ENCODE measurements at regions of chr12 and their contacts with region 1.

Region 1: GRCh38 chr12:2583091-2583497 is 211.7 kb upstream of the FKBP4 start:
- DNase-seq: peak; percentile 41 to 55
- ATAC-seq: peak; percentile 84 to 97
- H3K4me3 ChIP-seq: peak overlapping the region; percentile 30; the same call in 2 of the 3 replicates
- H3K27ac ChIP-seq: no peak overlapping the region
- H3K4me1 ChIP-seq: peaks cover 3% of the 10 kb centered on the region; the same call in 1 of the 3 replicates
- CTCF ChIP-seq: peak; percentile 83
- EP300 ChIP-seq: no peak
- POLR2A ChIP-seq: no peak
- RAD21 ChIP-seq: peak; percentile 77 to 91

Region 2: GRCh38 chr12:2057041-2057794 is 525.9 kb before region 1 on chr12:
- CTCF ChIA-PET with region 1: interaction called, 32 read pairs
- POLR2A ChIA-PET with region 1: no interaction called
- DNase-seq: peak in 1 of 2 experiments; percentile 49
- ATAC-seq: peak in 1 of 2 experiments; percentile 70; a peak in 3 of 6 replicates
- H3K4me3 ChIP-seq: no peak overlapping the region
- H3K27ac ChIP-seq: no peak overlapping the region
- H3K4me1 ChIP-seq: no peaks in the 10 kb centered on the region; the same call in 2 of the 3 replicates
- CTCF ChIP-seq: peak; percentile 45
- EP300 ChIP-seq: no peak
- POLR2A ChIP-seq: no peak
- RAD21 ChIP-seq: peak; percentile 49 to 66; a peak in 3 of 5 replicates

Region 3: GRCh38 chr12:2561367-2561766 is 21.7 kb before region 1 on chr12:
- CTCF ChIA-PET with region 1: interaction called, 13 read pairs
- POLR2A ChIA-PET with region 1: no interaction called
- DNase-seq: no peak
- ATAC-seq: no peak
- H3K4me3 ChIP-seq: no peak overlapping the region
- H3K27ac ChIP-seq: no peak overlapping the region
- H3K4me1 ChIP-seq: no peaks in the 10 kb centered on the region
- CTCF ChIP-seq: no peak
- EP300 ChIP-seq: no peak
- POLR2A ChIP-seq: no peak
- RAD21 ChIP-seq: no peak

Region 4: GRCh38 chr12:2607881-2608607 is 24.9 kb after region 1 on chr12:
- CTCF ChIA-PET with region 1: interaction called, 22 read pairs
- POLR2A ChIA-PET with region 1: no interaction called
- DNase-seq: no peak
- ATAC-seq: no peak
- H3K4me3 ChIP-seq: no peak overlapping the region
- H3K27ac ChIP-seq: no peak overlapping the region
- H3K4me1 ChIP-seq: no peaks in the 10 kb centered on the region; the same call in 2 of the 3 replicates
- CTCF ChIP-seq: no peak
- EP300 ChIP-seq: no peak
- POLR2A ChIP-seq: no peak
- RAD21 ChIP-seq: no peak

Region 5: DNA sequence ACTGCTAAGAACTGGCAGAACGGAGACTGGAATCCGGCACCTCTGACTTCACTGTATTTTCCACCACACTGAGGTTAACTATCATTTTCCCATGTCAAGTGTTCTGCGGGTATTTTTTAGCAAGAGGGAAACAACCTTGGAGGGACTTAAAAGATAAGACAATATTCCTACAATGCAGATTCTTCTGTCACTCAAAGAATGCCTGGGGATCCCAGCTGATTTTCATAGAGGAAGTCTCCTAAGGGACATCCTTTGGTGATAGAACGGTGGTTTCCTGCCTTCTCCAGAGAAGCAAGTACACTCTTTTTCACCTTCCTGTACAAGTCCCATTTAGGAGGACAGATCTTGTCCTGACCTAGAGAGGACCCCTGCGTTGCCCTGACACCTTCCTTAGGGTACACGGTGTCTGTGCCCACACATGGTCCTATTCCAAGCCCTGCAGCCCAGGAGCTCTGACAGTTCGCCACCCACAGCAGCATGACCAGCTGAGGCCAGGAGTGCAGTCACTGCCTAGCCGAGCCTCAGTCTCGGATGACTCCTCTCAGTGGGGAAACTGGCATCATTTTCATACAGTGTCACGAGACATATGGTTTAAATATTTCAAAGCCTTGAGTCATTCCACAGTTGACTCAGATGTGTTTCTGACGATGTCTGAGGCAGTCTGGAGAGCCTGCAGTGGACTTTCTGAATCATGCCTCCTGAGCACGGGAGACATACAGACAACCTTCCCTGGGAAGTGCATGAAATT is 30.4 kb after region 1 on chr12:
- CTCF ChIA-PET with region 1: interaction called, 22 read pairs
- POLR2A ChIA-PET with region 1: no interaction called
- DNase-seq: peak; percentile 22 to 66
- ATAC-seq: peak; percentile 89 to 92
- H3K4me3 ChIP-seq: no peak overlapping the region
- H3K27ac ChIP-seq: peak overlapping the region; percentile 16 to 33; a peak in 3 of 6 replicates
- H3K4me1 ChIP-seq: peaks cover 11% of the 10 kb centered on the region
- CTCF ChIP-seq: no peak
- EP300 ChIP-seq: no peak
- POLR2A ChIP-seq: no peak
- RAD21 ChIP-seq: no peak

Region 6: GRCh38 chr12:2624543-2625288 is 41.6 kb after region 1 on chr12:
- CTCF ChIA-PET with region 1: interaction called, 10 read pairs
- POLR2A ChIA-PET with region 1: no interaction called
- DNase-seq: peak in 1 of 2 experiments; percentile 55
- ATAC-seq: peak in 1 of 2 experiments; percentile 74; a peak in 3 of 6 replicates
- H3K4me3 ChIP-seq: no peak overlapping the region
- H3K27ac ChIP-seq: no peak overlapping the region
- H3K4me1 ChIP-seq: no peaks in the 10 kb centered on the region
- CTCF ChIP-seq: no peak; the same call in 2 of the 3 replicates
- EP300 ChIP-seq: no peak
- POLR2A ChIP-seq: no peak
- RAD21 ChIP-seq: no peak